Heart right ventricle (tissue), 16 donors: ENCODE measurements at regions of chr1 and their contacts with region 1.

Region 1: DNA sequence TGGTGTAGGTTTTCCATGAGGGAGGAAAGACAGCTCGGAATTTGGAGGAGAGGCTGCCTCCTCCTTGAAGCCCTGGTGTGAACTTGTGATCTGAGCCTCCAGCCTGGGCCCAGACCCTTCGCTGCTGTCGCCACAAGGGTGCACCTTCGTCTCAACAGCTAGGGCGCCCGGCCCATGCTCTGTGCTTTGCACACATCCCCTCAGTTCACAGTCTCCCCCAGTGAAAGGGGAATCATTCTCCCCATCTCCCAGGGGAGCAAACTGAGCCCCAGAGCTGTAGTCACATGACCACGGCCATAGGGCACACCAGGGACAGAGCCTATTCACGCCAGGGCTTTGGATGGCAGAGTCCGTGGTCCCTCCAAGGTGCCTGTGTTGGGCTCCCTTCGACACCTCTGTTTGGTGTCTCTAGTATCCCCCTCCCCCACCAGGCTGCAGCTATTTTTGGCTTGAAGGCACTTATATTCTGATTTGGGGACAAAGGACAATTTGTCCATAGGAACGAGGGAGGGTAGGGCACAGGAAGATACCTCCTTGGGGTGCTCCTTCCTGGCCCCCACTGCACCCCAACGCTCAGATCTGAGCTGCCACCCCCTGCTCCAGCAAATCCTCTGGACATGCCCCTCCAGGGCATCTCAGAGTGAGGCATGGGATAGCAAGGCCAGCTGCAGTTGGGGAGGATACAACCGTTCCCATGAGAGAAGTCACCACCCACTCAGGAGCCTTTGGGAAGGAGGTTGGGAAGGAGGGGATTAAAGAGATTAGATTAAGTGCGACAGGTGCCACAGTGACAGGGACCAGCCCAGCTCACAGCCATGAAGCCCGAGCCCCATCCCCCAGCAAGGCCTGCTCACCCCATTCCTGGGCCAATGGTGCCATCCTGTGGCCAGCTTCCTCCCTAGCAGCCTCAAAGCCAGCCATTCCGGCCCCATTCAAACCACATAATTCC is 15.7 kb downstream of the MATN1 start:
- DNase-seq: peak; percentile 58 to 77
- ATAC-seq: peak; percentile 71 to 90 (median 86)
- H3K4me3 ChIP-seq: no peak overlapping the region
- H3K27ac ChIP-seq: no peak overlapping the region
- H3K4me1 ChIP-seq: peaks cover 0 to 26% (median 12%) of the 10 kb centered on the region in 9 donors
- H3K27me3 ChIP-seq: peaks cover 0 to 24% (median 6%) of the 10 kb centered on the region in 7 donors
- CTCF ChIP-seq: peak; percentile 34 to 83 (median 81)

Region 2: GRCh38 chr1:29235955-29236684 is 1471.6 kb before region 1 on chr1 and contains the start of gene PTPRU:
- intact Hi-C with region 1: loop called in 8 of 10 experiments (anchors 2 to 10 kb)
- DNase-seq: peak; percentile 72 to 83
- ATAC-seq: peak; percentile 69 to 89 (median 80)
- H3K4me3 ChIP-seq: peak within 1 kb of the TSS; percentile 52 to 82 (median 66)
- H3K27ac ChIP-seq: peak within 1 kb of the TSS in 8 of 10 donors; percentile 13 to 73 (median 54)
- H3K4me1 ChIP-seq: peaks cover 5 to 30% (median 21%) of the 10 kb centered on the region in 9 donors
- H3K27me3 ChIP-seq: peaks cover 0 to 51% (median 0%) of the 10 kb centered on the region in 7 donors
- CTCF ChIP-seq: peak; percentile 63 to 99 (median 82)
- total RNA-seq, gene PTPRU: 8.6 to 29.8 (median 14.5) TPM

Region 3: GRCh38 chr1:29513357-29513756 is 1194.3 kb before region 1 on chr1:
- intact Hi-C with region 1: loop called in 3 of 10 experiments (anchors 5 kb)
- DNase-seq: peak in 1 of 2 donors; percentile 23
- ATAC-seq: peak; percentile 52 to 93 (median 72)
- H3K4me3 ChIP-seq: no peak overlapping the region
- H3K27ac ChIP-seq: no peak overlapping the region
- H3K4me1 ChIP-seq: no peaks in the 10 kb centered on the region
- H3K27me3 ChIP-seq: peaks cover 0 to 40% (median 4%) of the 10 kb centered on the region in 7 donors
- CTCF ChIP-seq: peak; percentile 28 to 61 (median 52)

Region 4: DNA sequence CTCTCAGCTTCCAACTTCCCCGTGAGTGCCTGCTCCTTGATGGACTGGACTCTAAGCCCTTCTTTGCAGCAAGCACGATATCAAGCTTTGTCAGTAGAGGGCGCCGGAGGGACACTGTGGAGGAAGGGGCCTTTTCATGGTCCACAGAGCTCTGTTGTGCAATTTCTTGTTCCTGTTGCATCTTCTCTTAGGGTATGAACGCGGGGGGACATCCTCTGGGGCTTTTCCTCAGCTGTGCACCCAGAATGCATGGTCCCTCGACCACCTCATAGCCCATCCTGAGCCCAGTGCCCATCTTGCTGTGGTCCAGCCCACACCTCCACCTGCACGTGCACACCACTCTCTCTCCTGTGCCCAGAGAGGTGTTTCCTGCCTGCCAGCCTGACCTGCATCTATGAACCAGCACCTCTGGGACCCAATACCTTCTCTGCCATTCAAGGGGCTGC is 914.6 kb before region 1 on chr1:
- intact Hi-C with region 1: loop called in 2 of 10 experiments (anchors 5 to 10 kb)
- DNase-seq: peak; percentile 71 to 78
- ATAC-seq: peak; percentile 55 to 87 (median 79)
- H3K4me3 ChIP-seq: no peak overlapping the region
- H3K27ac ChIP-seq: no peak overlapping the region
- H3K4me1 ChIP-seq: no peaks in the 10 kb centered on the region
- H3K27me3 ChIP-seq: peaks cover 0 to 16% (median 0%) of the 10 kb centered on the region in 7 donors
- CTCF ChIP-seq: peak; percentile 63 to 85 (median 81)

Region 5: GRCh38 chr1:30099587-30100523 is 607.8 kb before region 1 on chr1:
- intact Hi-C with region 1: loop called in 2 of 10 experiments (anchors 5 to 10 kb)
- DNase-seq: no peak
- ATAC-seq: no peak
- H3K4me3 ChIP-seq: no peak overlapping the region
- H3K27ac ChIP-seq: no peak overlapping the region
- H3K4me1 ChIP-seq: no peaks in the 10 kb centered on the region
- H3K27me3 ChIP-seq: peaks cover 0 to 60% (median 33%) of the 10 kb centered on the region in 7 donors
- CTCF ChIP-seq: no peak

Region 6: DNA sequence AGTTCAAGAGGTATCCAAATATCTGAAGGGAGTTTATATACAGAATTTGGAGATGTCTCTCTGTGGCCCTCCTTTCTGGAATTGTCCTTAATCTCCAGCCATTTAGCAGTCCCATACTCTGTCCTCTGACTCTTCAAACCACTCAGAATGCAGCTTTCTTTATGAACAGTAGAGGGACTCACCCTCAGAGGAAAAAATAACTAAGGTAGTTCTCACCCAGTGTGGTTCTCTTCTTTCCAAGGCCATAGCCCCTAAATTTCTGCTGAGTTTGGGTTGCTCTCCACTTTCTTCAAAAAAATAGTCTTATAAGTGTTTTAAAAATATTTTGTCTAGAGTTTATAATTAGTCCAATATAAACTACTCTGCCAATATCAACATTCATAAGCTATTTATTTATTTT is 354.0 kb before region 1 on chr1:
- intact Hi-C with region 1: loop called in 3 of 10 experiments (anchors 5 to 10 kb)
- DNase-seq: no peak
- ATAC-seq: peak in 1 of 8 donors; percentile 59
- H3K4me3 ChIP-seq: no peak overlapping the region
- H3K27ac ChIP-seq: no peak overlapping the region
- H3K4me1 ChIP-seq: no peaks in the 10 kb centered on the region
- H3K27me3 ChIP-seq: peaks cover 0 to 47% (median 17%) of the 10 kb centered on the region in 7 donors
- CTCF ChIP-seq: peak in 7 of 9 donors; percentile 16 to 48 (median 36)

Region 7: GRCh38 chr1:30525971-30526651 is 181.6 kb before region 1 on chr1:
- intact Hi-C with region 1: loop called in 3 of 10 experiments (anchors 2 to 10 kb)
- DNase-seq: peak; percentile 28 to 35
- ATAC-seq: peak in 5 of 8 donors; percentile 5 to 48 (median 26)
- H3K4me3 ChIP-seq: no peak overlapping the region
- H3K27ac ChIP-seq: peak overlapping the region in 9 of 10 donors; percentile 78 to 94 (median 87)
- H3K4me1 ChIP-seq: peaks cover 6 to 63% (median 31%) of the 10 kb centered on the region in 9 donors
- H3K27me3 ChIP-seq: peaks cover 0 to 9% (median 0%) of the 10 kb centered on the region in 7 donors
- CTCF ChIP-seq: no peak